SK-N-SH (cell line): ENCODE measurements at regions of chr10 and their contacts with region 1.

Region 1: DNA sequence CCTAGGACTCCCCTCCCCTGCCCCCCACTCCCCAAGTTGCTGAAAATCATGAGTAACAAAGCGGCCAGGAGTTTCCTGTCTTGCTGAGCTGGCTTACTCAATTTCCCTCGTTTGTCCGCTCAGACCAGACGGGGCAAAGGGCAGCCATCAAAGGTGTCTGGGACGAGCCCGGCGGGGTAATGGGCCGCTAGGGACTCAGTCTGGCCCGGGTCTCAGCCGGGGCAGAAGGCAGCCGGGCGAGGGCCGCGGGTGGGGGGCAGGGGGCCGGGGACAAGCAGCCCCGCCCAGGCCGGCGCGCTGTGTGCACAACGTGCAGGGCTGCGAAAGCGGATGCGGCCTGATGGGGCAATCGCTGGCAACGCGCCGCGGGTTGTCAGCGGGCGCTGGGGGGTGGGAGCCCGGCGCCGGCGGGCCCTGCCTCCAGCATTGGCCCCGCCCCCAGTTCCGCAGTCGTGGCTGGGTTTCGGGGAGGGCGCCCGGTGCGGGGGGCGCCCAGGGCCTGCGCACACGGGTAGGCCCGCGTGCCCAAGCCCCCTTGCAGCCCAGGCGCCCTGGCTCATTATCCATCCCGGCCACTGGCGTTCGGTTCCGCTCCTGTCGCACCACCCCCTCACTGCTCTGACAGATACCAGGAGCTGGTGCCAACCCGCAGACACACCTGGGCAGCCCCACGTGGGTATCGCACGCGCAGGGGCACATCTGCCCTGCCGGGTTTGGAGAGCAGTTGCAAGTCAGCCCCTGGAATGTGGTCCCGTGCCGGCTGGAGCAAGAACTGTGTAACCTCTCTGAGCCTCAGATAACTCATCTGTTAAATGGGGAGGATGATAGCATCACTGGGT is 35.1 kb downstream of the DNAJB12 start:
- DNase-seq: peak; percentile 91
- H3K4me3 ChIP-seq: peak overlapping the region; percentile 20 to 43; a peak in 3 of 4 replicates
- H3K27ac ChIP-seq: peak overlapping the region; percentile 94 to 97
- H3K4me1 ChIP-seq: peaks cover 45 to 78% of the 10 kb centered on the region in 2 experiments
- H3K27me3 ChIP-seq: no peaks in the 10 kb centered on the region
- CTCF ChIP-seq: no peak
- EP300 ChIP-seq: peak; percentile 30 to 83; a peak in 2 of 4 replicates
- RAD21 ChIP-seq: no peak; the same call in 1 of the 2 replicates

Region 2: GRCh38 chr10:72260588-72261322 is 58.9 kb before region 1 on chr10:
- CTCF ChIA-PET with region 1: interaction called, 7 read pairs
- POLR2A ChIA-PET with region 1: interaction called, 22 read pairs
- DNase-seq: peak; percentile 95
- H3K4me3 ChIP-seq: peak overlapping the region; percentile 52 to 64
- H3K27ac ChIP-seq: peak overlapping the region; percentile 41 to 96; a peak in 3 of 4 replicates
- H3K4me1 ChIP-seq: peaks cover 20 to 28% of the 10 kb centered on the region in 2 experiments
- H3K27me3 ChIP-seq: no peaks in the 10 kb centered on the region
- CTCF ChIP-seq: no peak; the same call in 1 of the 2 replicates
- EP300 ChIP-seq: no peak
- RAD21 ChIP-seq: no peak

Region 3: DNA sequence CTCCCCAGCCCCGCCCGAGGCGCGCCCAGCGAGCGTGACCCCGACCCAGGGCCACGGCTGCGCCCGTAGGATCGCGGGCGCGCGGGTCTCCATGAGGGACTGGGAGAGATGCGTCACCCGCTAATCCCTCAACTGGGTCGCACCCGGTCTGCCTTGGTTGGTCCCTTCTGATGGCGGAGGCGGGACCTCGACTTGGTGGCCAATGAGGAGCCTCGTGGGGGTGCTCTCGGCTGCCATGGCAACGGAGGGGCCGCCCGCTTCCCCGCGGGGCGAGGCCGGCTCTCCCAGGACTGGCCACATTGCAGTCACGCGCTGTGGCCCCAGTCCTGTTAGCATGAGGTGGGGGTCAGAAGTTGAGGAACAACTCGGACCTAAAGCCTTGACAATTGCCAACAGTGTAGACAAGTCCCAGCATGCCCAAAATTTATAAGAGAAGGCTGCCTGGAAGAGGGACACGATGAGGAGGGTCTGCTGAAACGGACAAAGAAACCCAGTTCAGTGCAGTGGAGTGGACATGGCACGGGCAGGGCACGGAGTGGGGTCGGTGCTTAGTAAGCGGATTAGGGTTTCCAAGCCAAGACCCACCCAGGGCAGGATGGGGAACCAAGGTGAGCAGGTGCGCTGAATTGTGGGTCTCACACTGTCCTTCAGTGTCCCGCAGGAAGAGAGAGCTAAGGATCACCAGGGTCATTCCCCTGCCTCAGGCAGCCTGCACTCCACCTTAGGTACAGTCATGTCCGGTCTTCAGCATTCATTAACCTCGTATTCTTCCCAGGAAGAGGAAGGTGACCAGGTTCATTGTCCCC is 21.5 kb before region 1 on chr10:
- CTCF ChIA-PET with region 1: no interaction called
- POLR2A ChIA-PET with region 1: interaction called, 10 read pairs
- DNase-seq: peak; percentile 98
- H3K4me3 ChIP-seq: peak overlapping the region; percentile 64 to 71
- H3K27ac ChIP-seq: peak overlapping the region; percentile 55 to 86; a peak in 3 of 4 replicates
- H3K4me1 ChIP-seq: peaks cover 6 to 16% of the 10 kb centered on the region in 2 experiments; a peak in 2 of 4 replicates
- H3K27me3 ChIP-seq: no peaks in the 10 kb centered on the region
- CTCF ChIP-seq: no peak
- EP300 ChIP-seq: no peak
- RAD21 ChIP-seq: no peak

Region 4: GRCh38 chr10:72308320-72308987 is 11.2 kb before region 1 on chr10:
- CTCF ChIA-PET with region 1: interaction called, 13 read pairs
- POLR2A ChIA-PET with region 1: interaction called, 7 read pairs
- DNase-seq: peak; percentile 78
- H3K4me3 ChIP-seq: no peak overlapping the region
- H3K27ac ChIP-seq: peak overlapping the region; percentile 41 to 78
- H3K4me1 ChIP-seq: peaks cover 9 to 29% of the 10 kb centered on the region in 2 experiments; a peak in 2 of 4 replicates
- H3K27me3 ChIP-seq: no peaks in the 10 kb centered on the region
- CTCF ChIP-seq: no peak
- EP300 ChIP-seq: no peak
- RAD21 ChIP-seq: no peak

Region 5: DNA sequence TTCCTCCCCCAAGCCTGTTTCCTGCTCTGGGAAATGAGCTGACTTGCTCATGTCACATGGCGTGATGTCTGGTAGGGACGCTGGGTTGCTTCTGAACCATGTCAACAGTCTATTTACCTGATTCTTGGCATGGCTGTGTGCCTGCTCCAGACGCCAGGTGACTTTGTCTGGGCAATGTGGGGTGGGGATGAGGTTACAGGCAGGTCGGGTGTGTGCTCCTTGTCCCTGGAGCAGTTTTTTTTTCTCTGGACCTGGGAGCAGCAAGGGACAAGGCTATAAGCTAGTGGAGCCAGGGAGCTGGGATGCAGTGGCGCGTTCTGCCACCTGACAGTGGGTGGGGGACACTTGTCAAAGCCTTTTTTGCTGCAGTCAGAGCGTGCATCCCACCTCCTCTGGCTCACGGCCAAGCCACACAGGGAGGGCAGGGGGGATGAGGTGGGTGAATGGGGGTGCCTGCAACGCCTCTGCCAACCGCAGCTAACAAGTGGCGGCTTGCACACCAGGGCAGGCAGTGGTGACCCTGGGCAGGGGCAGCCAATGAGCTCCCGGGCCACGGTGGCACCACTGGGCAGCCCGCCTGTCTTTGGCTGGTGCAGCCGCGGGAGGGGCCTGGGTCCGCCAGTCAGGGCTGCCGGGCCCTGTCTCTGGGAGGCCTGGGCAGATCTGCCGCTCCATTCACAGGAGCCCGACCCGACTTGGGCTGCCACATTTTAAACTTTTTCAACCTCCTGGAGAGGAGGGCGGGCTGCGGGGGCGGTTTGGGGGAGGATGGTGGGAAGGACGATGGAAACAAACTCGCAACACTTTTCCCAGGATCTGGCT is 12.2 kb after region 1 on chr10:
- CTCF ChIA-PET with region 1: interaction called, 48 read pairs
- POLR2A ChIA-PET with region 1: interaction called, 32 read pairs
- DNase-seq: peak; percentile 94
- H3K4me3 ChIP-seq: no peak overlapping the region; a peak in 1 of 4 replicates
- H3K27ac ChIP-seq: peak overlapping the region; percentile 28 to 99; a peak in 3 of 4 replicates
- H3K4me1 ChIP-seq: peaks cover 16 to 86% of the 10 kb centered on the region in 2 experiments
- H3K27me3 ChIP-seq: no peaks in the 10 kb centered on the region
- CTCF ChIP-seq: 0 out of 2 replicates have a peak, but pooled peaks have one; percentile 20
- EP300 ChIP-seq: peak; percentile 37 to 84; a peak in 2 of 4 replicates
- RAD21 ChIP-seq: peak; percentile 27